Calu3 (cell line): ENCODE measurements at regions of chr4 and their contacts with region 1.

Region 1: GRCh38 chr4:161564230-161564834 is 599.5 kb downstream of the FSTL5 start:
- DNase-seq: no peak
- H3K4me3 Mint-ChIP-seq: no peak overlapping the region
- H3K27ac Mint-ChIP-seq: no peak overlapping the region
- H3K4me1 Mint-ChIP-seq: no peaks in the 10 kb centered on the region
- H3K27me3 Mint-ChIP-seq: no peaks in the 10 kb centered on the region
- CTCF ChIP-seq: no peak

Region 2: DNA sequence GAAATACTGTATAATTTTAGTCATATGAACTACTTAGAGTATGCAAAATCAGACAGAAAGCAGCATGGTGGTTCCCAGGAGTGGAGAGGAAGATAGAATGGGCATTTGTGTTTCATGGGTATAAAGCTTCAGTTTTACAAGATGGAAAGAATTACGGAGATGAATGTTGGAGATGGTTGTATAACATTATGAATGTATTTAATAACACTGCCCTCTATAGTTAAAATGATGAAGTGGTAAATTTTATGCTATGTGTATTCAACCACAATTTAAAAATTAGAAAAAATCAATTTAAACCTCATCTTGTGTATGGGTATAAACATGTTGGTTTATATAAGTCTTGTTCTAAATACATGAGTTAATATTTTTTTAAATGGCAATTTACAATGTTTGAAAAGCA is 78.4 kb after region 1 on chr4:
- CTCF ChIA-PET with region 1: no interaction called
- intact Hi-C with region 1: loop called (anchors 2 kb)
- DNase-seq: no peak
- H3K4me3 Mint-ChIP-seq: no peak overlapping the region
- H3K27ac Mint-ChIP-seq: no peak overlapping the region
- H3K4me1 Mint-ChIP-seq: peaks cover 5% of the 10 kb centered on the region
- H3K27me3 Mint-ChIP-seq: no peaks in the 10 kb centered on the region
- CTCF ChIP-seq: no peak

Region 3: DNA sequence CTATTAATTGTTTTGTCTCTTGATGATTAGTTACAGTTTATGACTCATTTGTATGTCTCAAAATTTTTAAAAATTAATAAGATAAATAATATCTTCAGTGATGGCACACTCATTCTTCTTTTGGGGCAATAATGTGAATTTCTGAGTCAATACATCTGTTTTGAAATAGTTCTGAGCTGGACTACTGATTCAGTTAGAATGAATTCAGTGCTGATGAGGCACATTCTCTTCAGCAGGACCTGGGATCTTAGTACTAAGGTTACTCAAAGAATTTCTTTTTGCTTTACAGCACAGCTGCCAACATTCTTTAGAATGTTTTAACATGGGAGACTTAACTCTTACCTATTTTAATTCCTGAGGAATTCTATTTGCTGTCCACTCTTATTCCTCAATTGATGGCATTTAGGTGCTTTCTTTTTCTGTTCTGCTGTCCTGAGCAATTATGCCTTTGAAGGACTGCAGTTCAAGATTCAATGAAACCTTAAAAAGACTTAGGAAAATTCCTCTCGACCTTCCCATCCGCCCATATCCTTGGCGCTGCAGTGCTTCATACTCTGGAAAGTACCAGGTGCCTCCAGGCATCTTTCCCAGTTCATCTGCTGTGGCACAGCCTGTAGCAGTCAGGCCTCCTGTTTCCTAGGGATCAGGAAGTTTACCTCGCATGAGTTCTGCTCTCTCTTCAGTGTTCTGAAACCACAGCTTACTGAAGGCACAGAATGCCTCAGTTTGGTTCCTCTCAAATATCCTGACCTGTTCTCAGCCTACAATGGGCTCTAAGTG is 385.8 kb after region 1 on chr4:
- CTCF ChIA-PET with region 1: no interaction called
- intact Hi-C with region 1: loop called (anchors 2 kb)
- DNase-seq: no peak
- H3K4me3 Mint-ChIP-seq: no peak overlapping the region
- H3K27ac Mint-ChIP-seq: no peak overlapping the region
- H3K4me1 Mint-ChIP-seq: no peaks in the 10 kb centered on the region
- H3K27me3 Mint-ChIP-seq: no peaks in the 10 kb centered on the region
- CTCF ChIP-seq: no peak

Region 4: GRCh38 chr4:162131256-162131655 is 566.9 kb after region 1 on chr4:
- CTCF ChIA-PET with region 1: no interaction called
- intact Hi-C with region 1: loop called (anchors 10 kb)
- DNase-seq: peak; percentile 4
- H3K4me3 Mint-ChIP-seq: no peak overlapping the region
- H3K27ac Mint-ChIP-seq: no peak overlapping the region
- H3K4me1 Mint-ChIP-seq: no peaks in the 10 kb centered on the region
- H3K27me3 Mint-ChIP-seq: no peaks in the 10 kb centered on the region
- CTCF ChIP-seq: no peak

Region 5: GRCh38 chr4:162163852-162164759 is 599.8 kb after region 1 on chr4 and contains the start of gene FSTL5:
- CTCF ChIA-PET with region 1: no interaction called
- intact Hi-C with region 1: loop called (anchors 10 kb)
- DNase-seq: peak; percentile 4
- H3K4me3 Mint-ChIP-seq: no peak within 1 kb of the TSS
- H3K27ac Mint-ChIP-seq: no peak within 1 kb of the TSS
- H3K4me1 Mint-ChIP-seq: no peaks in the 10 kb centered on the region
- H3K27me3 Mint-ChIP-seq: no peaks in the 10 kb centered on the region
- CTCF ChIP-seq: no peak
- total RNA-seq, gene FSTL5: not detected in 2 replicates

Region 6: GRCh38 chr4:162422312-162422711 is 858.0 kb after region 1 on chr4:
- CTCF ChIA-PET with region 1: no interaction called
- intact Hi-C with region 1: no loop called
- DNase-seq: no peak
- H3K4me3 Mint-ChIP-seq: no peak overlapping the region
- H3K27ac Mint-ChIP-seq: no peak overlapping the region
- H3K4me1 Mint-ChIP-seq: no peaks in the 10 kb centered on the region
- H3K27me3 Mint-ChIP-seq: no peaks in the 10 kb centered on the region
- CTCF ChIP-seq: no peak

Region 7: GRCh38 chr4:162457071-162457865 is 892.9 kb after region 1 on chr4:
- CTCF ChIA-PET with region 1: no interaction called
- intact Hi-C with region 1: loop called (anchors 10 kb)
- DNase-seq: no peak
- H3K4me3 Mint-ChIP-seq: no peak overlapping the region
- H3K27ac Mint-ChIP-seq: no peak overlapping the region
- H3K4me1 Mint-ChIP-seq: no peaks in the 10 kb centered on the region
- H3K27me3 Mint-ChIP-seq: no peaks in the 10 kb centered on the region
- CTCF ChIP-seq: no peak